K562 (cell line): ENCODE measurements at regions of chr7 and their contacts with region 1.

Region 1: GRCh38 chr7:134254311-134254710 is 62.4 kb downstream of the SLC35B4 start:
- DNase-seq: peak in 3 of 4 experiments; percentile 26 to 82 (median 60)
- ATAC-seq: peak; percentile 89
- H3K4me3 ChIP-seq: no peak overlapping the region
- H3K27ac ChIP-seq: no peak overlapping the region
- H3K4me1 ChIP-seq: no peaks in the 10 kb centered on the region
- H3K27me3 ChIP-seq: peaks cover 6% of the 10 kb centered on the region in 2 experiments; a peak in 4 of 5 replicates
- CTCF ChIP-seq: peak; percentile 71 to 80 (median 79)
- EP300 ChIP-seq: no peak
- POLR2A ChIP-seq: no peak
- RAD21 ChIP-seq: peak; percentile 51 to 86

Region 2: DNA sequence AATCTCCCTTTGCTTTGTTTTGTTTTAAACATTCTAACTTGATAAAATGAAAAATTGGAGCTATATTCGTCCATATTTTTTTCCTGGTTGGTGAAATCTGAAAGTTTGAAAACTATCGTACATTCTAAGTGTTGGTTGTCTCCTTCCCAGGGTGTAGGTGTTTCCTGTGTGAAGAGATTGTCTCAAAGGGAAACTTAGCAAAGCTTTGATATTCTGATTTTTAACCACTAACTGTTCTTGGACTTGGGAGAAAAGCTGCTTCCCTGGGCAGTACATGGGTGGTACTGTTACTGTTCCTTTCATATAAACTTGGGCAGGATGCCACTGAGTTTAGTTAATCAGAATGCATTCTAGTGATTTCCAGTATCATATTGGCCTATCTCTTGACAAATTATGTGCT is 380.7 kb before region 1 on chr7:
- CTCF ChIA-PET with region 1: no interaction called
- POLR2A ChIA-PET with region 1: no interaction called
- in situ Hi-C with region 1: no loop called
- intact Hi-C with region 1: loop called (anchors 10 kb)
- DNase-seq: no peak
- ATAC-seq: no peak
- H3K4me3 ChIP-seq: no peak overlapping the region
- H3K27ac ChIP-seq: no peak overlapping the region
- H3K4me1 ChIP-seq: no peaks in the 10 kb centered on the region
- H3K27me3 ChIP-seq: no peaks in the 10 kb centered on the region
- CTCF ChIP-seq: no peak
- EP300 ChIP-seq: no peak
- POLR2A ChIP-seq: no peak
- RAD21 ChIP-seq: no peak

Region 3: GRCh38 chr7:134016223-134016941 is 237.9 kb before region 1 on chr7:
- CTCF ChIA-PET with region 1: no interaction called
- POLR2A ChIA-PET with region 1: no interaction called
- in situ Hi-C with region 1: no loop called
- intact Hi-C with region 1: loop called (anchors 10 kb)
- DNase-seq: peak in 2 of 4 experiments; percentile 57 to 58
- ATAC-seq: peak; percentile 89
- H3K4me3 ChIP-seq: no peak overlapping the region
- H3K27ac ChIP-seq: no peak overlapping the region
- H3K4me1 ChIP-seq: no peaks in the 10 kb centered on the region
- H3K27me3 ChIP-seq: no peaks in the 10 kb centered on the region
- CTCF ChIP-seq: peak; percentile 67 to 86 (median 84)
- EP300 ChIP-seq: no peak
- POLR2A ChIP-seq: no peak
- RAD21 ChIP-seq: peak; percentile 79 to 81

Region 4: DNA sequence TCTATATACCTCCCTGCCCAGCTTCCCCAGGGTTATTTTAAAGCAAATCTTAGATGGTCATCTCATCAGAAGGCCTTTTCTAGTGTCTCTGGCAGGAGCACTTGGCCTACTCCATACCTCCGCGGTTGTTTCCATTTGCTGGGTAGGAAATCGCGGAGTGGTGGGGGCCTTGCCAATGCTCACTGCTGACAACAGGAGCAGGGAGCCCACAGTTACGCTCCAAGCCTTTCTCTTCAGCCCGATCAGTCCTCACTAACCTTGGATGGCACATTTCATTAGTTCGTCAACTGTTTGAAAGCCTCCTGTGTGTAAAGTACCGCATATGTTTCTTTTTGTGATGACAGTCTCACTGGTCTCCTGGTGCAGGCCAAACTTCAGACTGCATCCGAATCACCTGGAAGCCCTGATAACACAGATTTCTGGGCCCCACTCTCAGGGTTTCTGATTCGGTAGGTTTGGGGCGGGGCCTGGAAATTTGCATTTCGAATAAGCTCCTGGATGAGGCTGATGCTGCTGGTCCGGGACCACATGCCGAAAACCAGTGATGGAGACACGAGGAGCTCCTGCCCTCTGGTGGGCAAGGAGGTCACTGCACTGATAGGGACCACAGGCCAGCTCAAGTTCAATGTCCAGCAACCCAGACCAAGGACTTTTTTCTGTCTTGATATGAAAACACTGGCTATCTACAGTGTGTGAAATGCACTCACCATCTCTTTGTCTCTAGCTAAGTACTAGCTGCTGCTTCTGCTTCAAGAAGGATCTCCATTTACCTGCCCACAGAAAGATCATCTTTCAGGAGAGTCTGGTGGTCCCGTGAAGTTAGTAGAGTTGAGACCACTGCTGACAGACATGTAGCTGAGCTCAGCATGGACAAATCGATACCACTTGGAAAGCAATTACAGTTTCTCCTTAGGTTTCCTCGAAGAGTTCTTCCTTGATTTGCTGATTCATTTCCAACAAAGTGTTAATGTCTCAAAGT is 113.1 kb before region 1 on chr7:
- CTCF ChIA-PET with region 1: no interaction called
- POLR2A ChIA-PET with region 1: no interaction called
- in situ Hi-C with region 1: no loop called
- intact Hi-C with region 1: loop called (anchors 1 kb)
- DNase-seq: peak; percentile 89 to 92 (median 90)
- ATAC-seq: peak; percentile 99
- H3K4me3 ChIP-seq: no peak overlapping the region
- H3K27ac ChIP-seq: no peak overlapping the region
- H3K4me1 ChIP-seq: peaks cover 0 to 3% of the 10 kb centered on the region in 2 experiments; a peak in 2 of 5 replicates
- H3K27me3 ChIP-seq: peaks cover 0 to 4% of the 10 kb centered on the region in 2 experiments; a peak in 1 of 5 replicates
- CTCF ChIP-seq: peak; percentile 92 to 98 (median 97)
- EP300 ChIP-seq: 0 out of 2 replicates have a peak, but pooled peaks have one; percentile 13
- POLR2A ChIP-seq: no peak
- RAD21 ChIP-seq: peak; percentile 93 to 95

Region 5: GRCh38 chr7:134327896-134328295 is 73.6 kb after region 1 on chr7:
- CTCF ChIA-PET with region 1: no interaction called
- POLR2A ChIA-PET with region 1: no interaction called
- in situ Hi-C with region 1: no loop called
- intact Hi-C with region 1: loop called (anchors 2 kb)
- DNase-seq: peak; percentile 76 to 91 (median 82)
- ATAC-seq: peak; percentile 99
- H3K4me3 ChIP-seq: no peak overlapping the region
- H3K27ac ChIP-seq: no peak overlapping the region
- H3K4me1 ChIP-seq: no peaks in the 10 kb centered on the region
- H3K27me3 ChIP-seq: peaks cover 8 to 15% of the 10 kb centered on the region in 2 experiments
- CTCF ChIP-seq: peak; percentile 86 to 93 (median 92)
- EP300 ChIP-seq: no peak
- POLR2A ChIP-seq: no peak
- RAD21 ChIP-seq: peak; percentile 69 to 90

Region 6: DNA sequence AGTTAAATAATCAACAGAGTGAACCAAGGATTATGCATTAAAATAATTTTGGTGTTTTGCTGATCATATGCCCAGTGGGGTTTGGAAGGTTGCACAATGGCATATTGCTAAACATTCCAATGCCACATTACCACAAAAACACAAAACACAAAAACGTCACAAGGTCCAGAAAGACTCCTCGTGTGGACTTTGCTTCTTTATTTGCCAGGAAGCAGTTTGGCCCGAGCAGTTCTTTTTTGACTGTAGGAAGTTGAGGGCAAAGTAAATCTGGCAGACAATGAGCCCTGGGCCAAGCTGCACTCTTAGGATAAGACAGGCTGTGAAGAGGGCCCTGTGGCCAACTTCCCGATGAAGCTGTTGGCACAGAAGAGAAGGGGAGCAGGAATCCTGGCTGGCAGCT is 101.6 kb after region 1 on chr7:
- CTCF ChIA-PET with region 1: no interaction called
- POLR2A ChIA-PET with region 1: no interaction called
- in situ Hi-C with region 1: no loop called
- intact Hi-C with region 1: loop called (anchors 2 kb)
- DNase-seq: no peak
- ATAC-seq: no peak
- H3K4me3 ChIP-seq: no peak overlapping the region
- H3K27ac ChIP-seq: no peak overlapping the region
- H3K4me1 ChIP-seq: peaks cover 5 to 15% of the 10 kb centered on the region in 2 experiments; a peak in 3 of 5 replicates
- H3K27me3 ChIP-seq: peaks cover 20 to 22% of the 10 kb centered on the region in 2 experiments
- CTCF ChIP-seq: no peak
- EP300 ChIP-seq: no peak
- POLR2A ChIP-seq: no peak
- RAD21 ChIP-seq: no peak

Region 7: GRCh38 chr7:134420424-134421125 is 166.3 kb after region 1 on chr7:
- CTCF ChIA-PET with region 1: no interaction called
- POLR2A ChIA-PET with region 1: no interaction called
- in situ Hi-C with region 1: no loop called
- intact Hi-C with region 1: loop called (anchors 1 kb)
- DNase-seq: peak; percentile 50 to 74 (median 62)
- ATAC-seq: peak; percentile 94
- H3K4me3 ChIP-seq: no peak overlapping the region
- H3K27ac ChIP-seq: no peak overlapping the region
- H3K4me1 ChIP-seq: peaks cover 0 to 4% of the 10 kb centered on the region in 2 experiments; a peak in 1 of 5 replicates
- H3K27me3 ChIP-seq: peaks cover 5 to 31% of the 10 kb centered on the region in 2 experiments
- CTCF ChIP-seq: peak; percentile 75 to 95 (median 89)
- EP300 ChIP-seq: no peak
- POLR2A ChIP-seq: no peak
- RAD21 ChIP-seq: peak; percentile 80 to 86